Breast epithelium (tissue), 4 donors: ENCODE measurements at regions of chr10 and their contacts with region 1.

Region 1: DNA sequence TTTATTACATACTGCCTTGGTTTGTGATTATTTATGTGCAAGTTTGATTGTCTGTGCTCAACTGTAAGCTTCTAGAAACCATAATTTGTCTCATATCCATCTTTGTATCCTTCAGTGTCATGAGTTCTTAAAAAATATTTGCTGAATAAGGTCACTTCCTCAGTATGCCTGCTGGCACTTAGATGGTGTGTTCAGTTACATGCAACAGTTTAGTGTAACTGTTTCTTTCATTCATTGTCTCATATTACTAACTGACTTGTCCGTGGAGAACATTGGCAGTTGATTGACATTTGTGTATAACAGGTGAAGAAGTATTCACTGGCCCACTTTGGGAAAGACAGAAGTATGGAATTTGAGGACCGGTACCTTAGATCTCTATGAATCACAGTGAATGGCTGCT is 236.9 kb downstream of the PRKG1 start:
- DNase-seq: no peak
- H3K4me3 ChIP-seq: no peak overlapping the region
- H3K27ac ChIP-seq: no peak overlapping the region
- H3K4me1 ChIP-seq: no peaks in the 10 kb centered on the region
- H3K27me3 ChIP-seq: no peaks in the 10 kb centered on the region
- CTCF ChIP-seq: no peak
- POLR2A ChIP-seq: no peak

Region 2: DNA sequence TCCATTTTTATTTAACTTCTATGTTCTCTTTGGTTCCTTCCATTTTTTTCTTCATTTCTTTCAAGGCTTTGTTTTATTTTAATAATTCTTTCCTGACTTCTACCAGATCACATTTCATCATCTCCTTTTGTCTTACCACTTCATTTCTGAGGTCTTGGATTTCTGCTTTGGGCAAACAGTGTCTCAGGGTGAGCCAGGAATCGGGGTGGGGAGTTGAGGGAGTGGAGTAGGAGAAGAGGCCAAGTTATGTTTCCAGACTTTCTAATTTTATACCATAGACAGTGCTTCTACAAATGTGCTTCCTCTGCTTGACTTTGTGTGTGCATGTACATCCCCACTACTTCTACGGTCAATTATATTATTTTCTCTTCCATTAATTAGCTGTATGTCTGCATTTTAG is 124.9 kb before region 1 on chr10:
- intact Hi-C with region 1: loop called (anchors 5 kb)
- DNase-seq: no peak
- H3K4me3 ChIP-seq: no peak overlapping the region
- H3K27ac ChIP-seq: no peak overlapping the region
- H3K4me1 ChIP-seq: peaks cover 0 to 4% of the 10 kb centered on the region in 2 donors
- H3K27me3 ChIP-seq: no peaks in the 10 kb centered on the region
- CTCF ChIP-seq: no peak
- POLR2A ChIP-seq: no peak